Caco-2 (cell line): ENCODE measurements at regions of chr10 and their contacts with region 1.

Region 1: GRCh38 chr10:104254493-104255310 is at the start of gene GSTO1:
- DNase-seq: peak; percentile 71 to 80
- H3K4me3 ChIP-seq: peak within 1 kb of the TSS; percentile 83
- H3K4me3 Mint-ChIP-seq: peak within 1 kb of the TSS; percentile 81
- H3K27ac Mint-ChIP-seq: peak within 1 kb of the TSS; percentile 73
- H3K4me1 ChIP-seq: peaks cover 47% of the 10 kb centered on the region
- H3K4me1 Mint-ChIP-seq: peaks cover 39% of the 10 kb centered on the region
- H3K27me3 ChIP-seq: no peaks in the 10 kb centered on the region
- H3K27me3 Mint-ChIP-seq: no peaks in the 10 kb centered on the region
- CTCF ChIP-seq: peak in 1 of 2 experiments; percentile 1
- total RNA-seq, gene GSTO1: 167 and 182 TPM in 2 replicates

Region 2: DNA sequence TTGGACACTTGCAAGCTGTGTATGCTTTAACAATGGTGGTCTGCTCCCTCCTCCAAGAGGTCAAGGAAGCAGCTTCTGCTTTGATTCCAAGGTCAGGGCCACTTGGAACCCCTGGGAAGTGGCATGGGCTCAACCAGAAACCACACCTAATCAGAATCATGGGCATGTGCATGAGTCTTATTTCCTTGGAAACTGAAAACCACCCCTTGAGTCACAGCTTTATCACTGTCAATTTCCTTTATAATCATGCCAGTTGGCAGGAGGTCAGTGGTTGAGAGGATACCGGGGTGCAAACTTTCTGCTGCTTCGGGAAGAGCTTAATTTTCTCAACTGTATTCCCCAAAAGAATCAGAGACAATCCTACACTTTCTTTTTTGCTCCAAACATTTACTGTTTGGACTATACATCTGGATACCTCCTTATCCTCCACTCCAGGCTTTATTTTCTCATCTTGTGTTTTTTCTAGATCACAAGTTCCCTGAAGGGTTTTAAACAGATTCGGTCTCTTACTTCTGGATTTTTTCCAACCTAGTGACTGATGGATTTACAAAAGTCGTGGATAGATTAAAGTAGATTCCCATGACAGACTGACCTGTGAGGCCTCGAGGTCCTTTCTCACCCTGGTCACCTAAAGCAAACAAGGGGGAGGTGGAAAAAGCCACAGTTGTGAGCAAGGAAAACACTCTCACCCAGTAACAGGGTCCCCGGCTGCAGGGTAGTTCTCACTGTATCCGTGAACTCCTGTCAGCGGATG is 205.0 kb before region 1 on chr10:
- CTCF ChIA-PET with region 1: no interaction called
- POLR2A ChIA-PET with region 1: no interaction called
- intact Hi-C with region 1: no loop called
- DNase-seq: no peak
- H3K4me3 ChIP-seq: no peak overlapping the region
- H3K4me3 Mint-ChIP-seq: no peak overlapping the region
- H3K27ac Mint-ChIP-seq: no peak overlapping the region
- H3K4me1 ChIP-seq: peaks cover 13% of the 10 kb centered on the region; the same call in 1 of the 2 replicates
- H3K4me1 Mint-ChIP-seq: no peaks in the 10 kb centered on the region
- H3K27me3 ChIP-seq: no peaks in the 10 kb centered on the region
- H3K27me3 Mint-ChIP-seq: no peaks in the 10 kb centered on the region
- CTCF ChIP-seq: no peak

Region 3: DNA sequence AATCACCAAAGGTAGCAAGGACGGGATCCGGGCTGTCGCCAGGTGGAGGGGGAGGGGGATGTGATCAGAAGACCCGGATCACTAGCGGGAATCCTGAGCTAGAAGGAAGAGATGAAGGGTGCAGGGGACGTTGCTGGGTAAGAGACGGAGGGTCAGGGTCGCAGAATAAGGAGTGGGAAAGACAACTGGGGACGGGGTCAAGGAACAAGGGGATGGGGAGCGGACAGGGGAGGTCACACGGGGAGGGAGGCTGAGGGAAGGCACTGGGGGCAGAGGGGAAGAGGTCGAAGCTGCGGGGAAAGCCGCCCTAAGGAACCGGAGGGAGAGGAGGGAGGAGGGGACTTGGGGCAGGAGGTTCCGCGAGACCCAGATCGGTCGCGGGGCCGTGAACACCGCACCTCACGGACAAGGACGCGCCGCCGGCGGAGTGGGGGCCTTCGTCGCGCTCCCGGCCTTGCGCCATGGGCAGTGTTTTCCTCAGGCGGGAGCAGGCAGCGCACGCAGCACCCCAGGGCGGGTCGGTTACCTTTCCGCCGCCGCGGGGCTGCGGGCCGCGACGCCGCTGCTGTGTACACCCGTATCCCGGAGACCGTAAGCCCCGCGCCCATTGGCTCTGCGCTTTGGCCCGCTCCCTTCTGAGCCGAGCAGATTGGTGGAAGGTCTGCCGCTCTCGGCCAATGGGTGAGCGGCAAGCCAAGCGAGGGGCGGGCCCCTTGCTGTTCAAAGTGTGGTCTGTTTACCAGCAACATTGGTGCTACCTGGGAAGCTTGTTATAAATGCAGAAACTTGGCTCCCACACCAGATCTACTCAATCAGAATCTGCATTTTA is 22.7 kb before region 1 on chr10 and contains the start of gene CFAP43:
- CTCF ChIA-PET with region 1: no interaction called
- POLR2A ChIA-PET with region 1: interaction called, 5 read pairs
- intact Hi-C with region 1: loop called (anchors 1 kb)
- DNase-seq: peak; percentile 99 to 100
- H3K4me3 ChIP-seq: peak within 1 kb of the TSS; percentile 99
- H3K4me3 Mint-ChIP-seq: peak within 1 kb of the TSS; percentile 88
- H3K27ac Mint-ChIP-seq: peak within 1 kb of the TSS; percentile 96
- H3K4me1 ChIP-seq: peaks cover 26% of the 10 kb centered on the region
- H3K4me1 Mint-ChIP-seq: peaks cover 19% of the 10 kb centered on the region
- H3K27me3 ChIP-seq: no peaks in the 10 kb centered on the region
- H3K27me3 Mint-ChIP-seq: no peaks in the 10 kb centered on the region
- CTCF ChIP-seq: no peak
- total RNA-seq, gene CFAP43: 0.52 and 0.77 TPM in 2 replicates

Region 4: GRCh38 chr10:104243512-104243911 is 11.2 kb before region 1 on chr10:
- CTCF ChIA-PET with region 1: no interaction called
- POLR2A ChIA-PET with region 1: no interaction called
- intact Hi-C with region 1: loop called (anchors 1 kb)
- DNase-seq: no peak
- H3K4me3 ChIP-seq: no peak overlapping the region
- H3K4me3 Mint-ChIP-seq: no peak overlapping the region
- H3K27ac Mint-ChIP-seq: peak overlapping the region; percentile 73
- H3K4me1 ChIP-seq: peaks cover 17% of the 10 kb centered on the region
- H3K4me1 Mint-ChIP-seq: peaks cover 9% of the 10 kb centered on the region
- H3K27me3 ChIP-seq: no peaks in the 10 kb centered on the region
- H3K27me3 Mint-ChIP-seq: no peaks in the 10 kb centered on the region
- CTCF ChIP-seq: no peak

Region 5: DNA sequence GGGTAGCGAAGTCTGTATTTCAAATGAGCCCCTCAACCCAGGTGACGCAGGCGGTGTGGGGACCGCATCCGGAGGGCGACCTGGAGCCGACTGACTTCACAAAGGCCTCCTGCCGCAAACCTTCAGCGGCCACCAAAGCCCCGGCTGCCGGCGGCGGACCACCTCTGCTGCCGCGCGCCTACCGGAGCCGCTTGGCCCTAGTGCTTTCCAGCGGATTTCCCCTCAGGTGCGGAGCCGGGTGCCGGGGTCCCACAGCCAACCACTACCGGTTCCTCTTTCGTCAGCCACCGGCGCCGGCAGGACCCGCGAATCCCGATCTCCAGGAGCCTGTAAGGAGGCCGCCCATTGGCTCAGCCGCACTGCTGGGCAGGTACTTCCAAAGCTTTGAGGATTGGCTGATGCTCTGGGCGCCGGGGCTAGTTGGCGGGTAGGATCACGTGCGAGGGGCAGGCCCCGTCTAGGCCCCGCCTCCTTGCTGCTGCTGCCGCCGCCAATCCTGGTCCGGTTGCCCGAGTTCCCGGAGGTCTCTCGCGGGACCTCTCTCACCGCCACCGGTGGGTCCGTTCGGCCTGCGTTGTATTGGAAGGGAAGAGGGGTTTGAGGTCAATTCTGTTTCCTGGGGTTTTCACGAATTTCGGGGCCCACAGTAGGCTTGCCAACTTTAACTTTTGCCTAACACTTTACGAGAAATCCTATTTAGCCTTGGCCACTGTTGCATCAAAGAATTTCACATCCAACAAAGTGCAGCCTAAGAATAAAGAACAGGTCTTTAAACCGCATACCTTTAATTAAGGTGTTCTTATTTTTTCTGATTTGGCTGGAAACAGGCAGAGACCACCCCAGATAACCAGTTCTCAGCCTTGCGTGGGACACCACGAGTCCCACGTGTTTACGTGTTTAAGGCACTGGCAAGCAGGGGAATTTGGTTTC is 14.3 kb after region 1 on chr10 and contains the start of gene GSTO2:
- CTCF ChIA-PET with region 1: interaction called, 3 read pairs
- POLR2A ChIA-PET with region 1: interaction called, 19 read pairs
- intact Hi-C with region 1: loop called (anchors 1 kb)
- DNase-seq: peak; percentile 99
- H3K4me3 ChIP-seq: peak within 1 kb of the TSS; percentile 86
- H3K4me3 Mint-ChIP-seq: peak within 1 kb of the TSS; percentile 74
- H3K27ac Mint-ChIP-seq: peak within 1 kb of the TSS; percentile 60
- H3K4me1 ChIP-seq: peaks cover 19% of the 10 kb centered on the region
- H3K4me1 Mint-ChIP-seq: peaks cover 9% of the 10 kb centered on the region
- H3K27me3 ChIP-seq: no peaks in the 10 kb centered on the region
- H3K27me3 Mint-ChIP-seq: no peaks in the 10 kb centered on the region
- CTCF ChIP-seq: no peak
- total RNA-seq, gene GSTO2: 1.1 and 1.4 TPM in 2 replicates

Region 6: DNA sequence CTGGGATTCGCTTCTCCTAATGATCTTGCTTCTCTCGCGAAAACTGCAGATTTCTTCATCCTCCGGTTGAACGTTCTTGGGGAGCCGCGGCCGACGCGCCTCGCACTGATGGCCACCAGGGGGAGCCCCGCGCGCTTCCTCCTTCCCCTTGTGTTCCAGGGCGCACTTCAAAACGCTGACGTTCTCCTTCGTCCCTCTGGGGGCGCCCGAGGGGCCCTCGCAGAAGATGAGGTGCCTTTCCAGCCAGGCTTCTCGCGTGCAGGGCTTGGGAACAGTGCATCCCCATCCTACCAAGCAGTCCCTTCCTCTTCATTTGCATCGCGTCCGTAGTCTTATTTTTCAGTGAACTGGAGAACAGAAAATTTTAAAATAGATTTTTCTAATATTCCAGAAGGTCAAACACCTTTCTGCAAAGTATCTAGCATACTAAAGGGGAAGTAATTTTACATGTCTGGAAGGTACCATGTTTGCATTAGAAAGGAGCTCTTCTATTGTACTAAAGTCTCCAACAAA is 36.8 kb after region 1 on chr10:
- CTCF ChIA-PET with region 1: no interaction called
- POLR2A ChIA-PET with region 1: no interaction called
- intact Hi-C with region 1: loop called (anchors 2 kb)
- DNase-seq: peak; percentile 86 to 91
- H3K4me3 ChIP-seq: no peak overlapping the region
- H3K4me3 Mint-ChIP-seq: peak overlapping the region; percentile 48
- H3K27ac Mint-ChIP-seq: no peak overlapping the region
- H3K4me1 ChIP-seq: peaks cover 13% of the 10 kb centered on the region
- H3K4me1 Mint-ChIP-seq: peaks cover 7% of the 10 kb centered on the region
- H3K27me3 ChIP-seq: no peaks in the 10 kb centered on the region
- H3K27me3 Mint-ChIP-seq: peaks cover 3% of the 10 kb centered on the region
- CTCF ChIP-seq: peak; percentile 98 to 100